IMR-90 (cell line): ENCODE measurements at regions of chr5 and their contacts with region 1.

Region 1: GRCh38 chr5:76874088-76874581 is 24.3 kb downstream of the S100Z start:
- DNase-seq: no peak
- ATAC-seq: no peak
- H3K4me3 ChIP-seq: no peak overlapping the region
- H3K27ac ChIP-seq: no peak overlapping the region
- H3K4me1 ChIP-seq: no peaks in the 10 kb centered on the region
- H3K27me3 ChIP-seq: peaks cover 12% of the 10 kb centered on the region
- CTCF ChIP-seq: no peak
- POLR2A ChIP-seq: no peak
- RAD21 ChIP-seq: no peak

Region 2: DNA sequence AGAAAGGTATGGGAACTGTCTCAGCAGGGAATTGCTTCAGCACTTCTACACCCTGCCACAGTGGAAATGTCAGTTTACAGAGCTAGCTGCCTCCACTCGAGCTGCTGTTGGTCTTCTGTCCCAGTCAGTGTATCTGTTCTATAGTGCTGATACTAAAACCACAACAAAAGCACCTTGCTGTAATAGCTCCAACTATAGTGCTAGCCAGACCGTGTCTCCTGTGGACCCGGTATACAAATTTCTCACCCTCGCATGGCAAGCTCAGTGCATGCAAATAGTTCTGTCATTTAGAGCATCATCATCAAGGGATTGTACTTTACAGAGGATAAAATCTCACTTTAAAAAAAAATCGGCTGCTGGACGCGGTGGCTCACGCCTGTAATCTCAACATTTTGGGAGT is 522.6 kb before region 1 on chr5:
- CTCF ChIA-PET with region 1: no interaction called
- POLR2A ChIA-PET with region 1: no interaction called
- dilution Hi-C with region 1: no loop called
- in situ Hi-C with region 1: no loop called
- intact Hi-C with region 1: no loop called
- DNase-seq: no peak
- ATAC-seq: no peak
- H3K4me3 ChIP-seq: no peak overlapping the region
- H3K27ac ChIP-seq: no peak overlapping the region
- H3K4me1 ChIP-seq: no peaks in the 10 kb centered on the region
- H3K27me3 ChIP-seq: no peaks in the 10 kb centered on the region
- CTCF ChIP-seq: no peak
- POLR2A ChIP-seq: no peak
- RAD21 ChIP-seq: no peak

Region 3: DNA sequence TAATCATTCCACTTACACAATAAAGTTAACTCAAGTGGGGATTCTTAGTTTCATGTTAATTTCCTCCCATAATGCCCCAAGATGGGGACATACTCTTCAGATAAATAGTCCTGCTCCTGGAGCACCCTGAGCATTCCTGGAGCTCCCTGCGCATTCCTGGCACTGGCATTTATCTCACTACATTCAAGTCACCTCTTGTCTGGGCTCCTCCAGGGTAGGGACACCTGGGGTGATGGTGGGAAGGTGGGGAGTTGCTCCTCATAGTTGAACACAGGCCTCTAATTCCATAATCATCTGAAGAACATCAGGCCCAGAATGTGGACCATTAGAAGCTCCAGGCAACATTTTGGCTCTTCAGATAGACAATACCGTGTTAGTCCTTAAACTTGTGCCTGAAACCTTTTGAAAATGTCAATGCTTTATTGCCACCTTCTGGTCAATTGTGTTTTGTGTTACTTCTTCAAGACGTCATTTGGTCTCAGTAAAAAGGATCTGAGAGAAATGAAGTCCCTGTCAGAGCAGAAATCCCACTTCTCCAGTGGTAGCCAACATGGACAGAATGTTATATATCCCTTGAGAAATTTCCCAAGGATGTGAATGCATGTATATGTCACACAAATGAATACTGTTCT is 141.9 kb after region 1 on chr5:
- CTCF ChIA-PET with region 1: interaction called, 9 read pairs
- POLR2A ChIA-PET with region 1: no interaction called
- dilution Hi-C with region 1: no loop called
- in situ Hi-C with region 1: loop called (anchors 10 kb)
- intact Hi-C with region 1: no loop called
- DNase-seq: peak; percentile 69
- ATAC-seq: peak; percentile 64
- H3K4me3 ChIP-seq: no peak overlapping the region
- H3K27ac ChIP-seq: no peak overlapping the region
- H3K4me1 ChIP-seq: no peaks in the 10 kb centered on the region
- H3K27me3 ChIP-seq: peaks cover 7% of the 10 kb centered on the region
- CTCF ChIP-seq: peak; percentile 43
- POLR2A ChIP-seq: no peak
- RAD21 ChIP-seq: peak; percentile 53